PC-3 (cell line): ENCODE measurements at regions of chr14 and their contacts with region 1.

Region 1: GRCh38 chr14:68377459-68377858 is 415.4 kb downstream of the ZFP36L1 start:
- DNase-seq: no peak
- ATAC-seq: no peak
- H3K4me3 ChIP-seq: no peak overlapping the region
- H3K27ac ChIP-seq: no peak overlapping the region
- H3K4me1 ChIP-seq: peaks cover 33% of the 10 kb centered on the region
- H3K27me3 ChIP-seq: no peaks in the 10 kb centered on the region
- CTCF ChIP-seq: no peak

Region 2: GRCh38 chr14:68255697-68256203 is 121.7 kb before region 1 on chr14:
- CTCF ChIA-PET with region 1: interaction called, 21 read pairs
- POLR2A ChIA-PET with region 1: interaction called, 12 read pairs
- intact Hi-C with region 1: loop called (anchors 1 kb)
- DNase-seq: peak; percentile 94
- ATAC-seq: peak; percentile 98
- H3K4me3 ChIP-seq: no peak overlapping the region
- H3K27ac ChIP-seq: peak overlapping the region; percentile 29
- H3K4me1 ChIP-seq: peaks cover 33% of the 10 kb centered on the region
- H3K27me3 ChIP-seq: no peaks in the 10 kb centered on the region
- CTCF ChIP-seq: no peak

Region 3: GRCh38 chr14:68408680-68409079 is 31.2 kb after region 1 on chr14:
- CTCF ChIA-PET with region 1: interaction called, 3 read pairs
- POLR2A ChIA-PET with region 1: interaction called, 4 read pairs
- intact Hi-C with region 1: loop called (anchors 1 kb)
- DNase-seq: peak; percentile 63
- ATAC-seq: peak; percentile 59
- H3K4me3 ChIP-seq: no peak overlapping the region
- H3K27ac ChIP-seq: peak overlapping the region; percentile 22; the same call in 1 of the 2 replicates
- H3K4me1 ChIP-seq: peaks cover 56% of the 10 kb centered on the region
- H3K27me3 ChIP-seq: no peaks in the 10 kb centered on the region
- CTCF ChIP-seq: peak; percentile 63

Region 4: DNA sequence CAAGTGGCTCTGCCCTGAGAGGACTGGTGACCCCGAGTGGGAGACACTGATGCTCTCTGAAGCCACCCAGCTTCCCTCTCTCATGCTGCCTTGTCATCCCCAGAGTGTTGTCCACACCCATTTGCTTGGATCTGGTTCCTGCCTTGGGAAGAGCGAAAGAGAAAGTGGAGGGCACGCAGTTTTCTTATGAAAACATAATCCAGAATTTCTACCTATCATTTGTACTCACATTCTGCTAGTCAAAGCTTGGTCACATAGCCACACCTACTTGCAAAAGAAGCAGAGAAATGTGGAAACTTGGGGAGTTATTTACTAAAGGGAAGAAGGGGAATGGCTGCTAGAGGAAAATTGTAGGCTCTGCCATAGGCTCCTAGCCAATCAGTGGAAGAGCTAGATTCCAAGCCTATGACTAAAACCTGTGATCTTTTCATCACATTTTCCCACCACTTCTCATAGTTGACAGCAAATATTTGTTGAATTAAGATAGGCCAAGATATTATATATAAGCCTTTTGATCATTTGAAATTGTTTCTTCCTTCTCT is 89.1 kb after region 1 on chr14:
- CTCF ChIA-PET with region 1: interaction called, 6 read pairs
- POLR2A ChIA-PET with region 1: no interaction called
- intact Hi-C with region 1: loop called (anchors 2 kb)
- DNase-seq: peak; percentile 96
- ATAC-seq: peak; percentile 34
- H3K4me3 ChIP-seq: no peak overlapping the region; the same call in 1 of the 2 replicates
- H3K27ac ChIP-seq: peak overlapping the region; percentile 55
- H3K4me1 ChIP-seq: peaks cover 59% of the 10 kb centered on the region
- H3K27me3 ChIP-seq: no peaks in the 10 kb centered on the region
- CTCF ChIP-seq: no peak

Region 5: GRCh38 chr14:68598621-68599447 is 221.4 kb after region 1 on chr14:
- CTCF ChIA-PET with region 1: no interaction called
- POLR2A ChIA-PET with region 1: interaction called, 3 read pairs
- intact Hi-C with region 1: loop called (anchors 1 kb)
- DNase-seq: peak; percentile 97
- ATAC-seq: peak; percentile 92
- H3K4me3 ChIP-seq: peak overlapping the region; percentile 60
- H3K27ac ChIP-seq: peak overlapping the region; percentile 99
- H3K4me1 ChIP-seq: peaks cover 27% of the 10 kb centered on the region
- H3K27me3 ChIP-seq: no peaks in the 10 kb centered on the region
- CTCF ChIP-seq: no peak

Region 6: GRCh38 chr14:68780358-68781160 is 403.1 kb after region 1 on chr14:
- CTCF ChIA-PET with region 1: no interaction called
- POLR2A ChIA-PET with region 1: no interaction called
- intact Hi-C with region 1: loop called (anchors 2 kb)
- DNase-seq: peak; percentile 43
- ATAC-seq: peak; percentile 20
- H3K4me3 ChIP-seq: peak overlapping the region; percentile 32
- H3K27ac ChIP-seq: peak overlapping the region; percentile 80
- H3K4me1 ChIP-seq: peaks cover 60% of the 10 kb centered on the region
- H3K27me3 ChIP-seq: no peaks in the 10 kb centered on the region
- CTCF ChIP-seq: no peak

Region 7: GRCh38 chr14:68816262-68816942 is 438.9 kb after region 1 on chr14:
- CTCF ChIA-PET with region 1: interaction called, 3 read pairs
- POLR2A ChIA-PET with region 1: interaction called, 6 read pairs
- intact Hi-C with region 1: loop called (anchors 1 kb)
- DNase-seq: peak; percentile 92
- ATAC-seq: peak; percentile 90
- H3K4me3 ChIP-seq: peak overlapping the region; percentile 60
- H3K27ac ChIP-seq: peak overlapping the region; percentile 83
- H3K4me1 ChIP-seq: peaks cover 22% of the 10 kb centered on the region
- H3K27me3 ChIP-seq: no peaks in the 10 kb centered on the region
- CTCF ChIP-seq: peak; percentile 97